ENCODE measurements at regions of chr9 and their contacts with region 1.

Region 1: GRCh38 chr9:93682232-93682968 is 106.0 kb downstream of the PHF2 start:
- DNase-seq: peak; percentile 72

Region 2: DNA sequence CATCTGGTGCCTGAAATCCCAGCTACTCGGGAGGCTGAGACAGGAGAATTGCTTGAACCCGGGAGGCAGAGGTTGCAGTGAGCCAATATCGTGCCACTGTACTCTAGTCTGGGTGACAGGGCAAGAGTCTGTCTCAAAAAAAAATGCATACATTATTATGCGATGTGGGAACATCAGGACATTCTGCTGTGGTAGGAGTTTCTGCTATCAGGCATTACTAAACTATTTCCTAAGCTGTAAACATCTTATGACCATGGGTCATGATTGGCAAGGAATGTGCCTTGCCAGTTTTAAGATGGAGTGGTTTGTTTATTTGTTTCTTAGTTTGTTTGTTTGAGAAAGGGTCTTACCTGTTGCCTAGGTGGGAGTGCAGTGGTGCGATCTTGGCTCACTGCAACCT is 276.0 kb before region 1 on chr9:
- intact Hi-C with region 1: no loop called
- DNase-seq: no peak

Region 3: GRCh38 chr9:93496296-93496695 is 186.1 kb before region 1 on chr9:
- intact Hi-C with region 1: no loop called
- DNase-seq: no peak

Region 4: GRCh38 chr9:93730217-93730616 is 47.8 kb after region 1 on chr9:
- intact Hi-C with region 1: no loop called
- DNase-seq: no peak

Region 5: GRCh38 chr9:93962561-93963440 is 280.4 kb after region 1 on chr9:
- intact Hi-C with region 1: loop called (anchors 2 kb)
- DNase-seq: peak; percentile 90

Region 6: DNA sequence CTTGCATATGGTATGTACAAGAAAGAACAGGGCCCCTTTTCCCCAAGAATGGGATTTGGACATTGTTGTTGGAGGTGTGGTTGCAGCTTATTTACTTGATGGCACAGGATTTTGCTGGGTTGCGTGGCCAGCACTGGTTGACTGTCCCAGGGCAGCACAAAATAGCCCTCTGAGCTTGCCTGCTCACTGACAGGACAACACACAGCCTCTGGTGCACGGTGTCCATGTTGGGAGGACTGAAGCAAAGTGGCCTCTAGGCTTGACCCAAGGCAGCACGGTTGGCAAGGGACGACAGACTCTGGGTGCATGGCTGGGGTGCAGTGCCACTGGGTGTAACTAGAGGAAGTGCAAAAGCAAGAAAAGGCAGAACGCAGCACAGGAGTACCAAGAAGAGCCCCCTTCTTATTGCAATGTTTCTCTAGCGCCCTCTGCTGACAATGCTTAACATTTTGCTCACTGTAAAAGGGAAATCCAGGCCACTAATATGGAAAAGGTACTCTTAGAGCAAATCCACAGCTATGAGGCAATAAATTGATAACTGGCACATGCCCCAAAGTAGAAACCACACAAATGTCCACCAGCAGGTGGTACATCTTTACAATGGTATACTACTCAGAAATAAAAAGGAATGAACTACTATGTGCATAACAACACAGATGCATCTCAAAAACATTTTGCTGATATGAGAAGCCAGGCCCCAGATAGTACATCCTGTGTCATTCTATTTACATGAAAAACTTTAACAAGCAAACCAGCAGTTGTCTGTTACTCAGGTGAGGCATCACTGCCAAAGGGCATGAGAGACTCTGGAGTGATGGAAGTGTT is 320.1 kb after region 1 on chr9:
- intact Hi-C with region 1: loop called (anchors 5 kb)
- DNase-seq: no peak

Region 7: DNA sequence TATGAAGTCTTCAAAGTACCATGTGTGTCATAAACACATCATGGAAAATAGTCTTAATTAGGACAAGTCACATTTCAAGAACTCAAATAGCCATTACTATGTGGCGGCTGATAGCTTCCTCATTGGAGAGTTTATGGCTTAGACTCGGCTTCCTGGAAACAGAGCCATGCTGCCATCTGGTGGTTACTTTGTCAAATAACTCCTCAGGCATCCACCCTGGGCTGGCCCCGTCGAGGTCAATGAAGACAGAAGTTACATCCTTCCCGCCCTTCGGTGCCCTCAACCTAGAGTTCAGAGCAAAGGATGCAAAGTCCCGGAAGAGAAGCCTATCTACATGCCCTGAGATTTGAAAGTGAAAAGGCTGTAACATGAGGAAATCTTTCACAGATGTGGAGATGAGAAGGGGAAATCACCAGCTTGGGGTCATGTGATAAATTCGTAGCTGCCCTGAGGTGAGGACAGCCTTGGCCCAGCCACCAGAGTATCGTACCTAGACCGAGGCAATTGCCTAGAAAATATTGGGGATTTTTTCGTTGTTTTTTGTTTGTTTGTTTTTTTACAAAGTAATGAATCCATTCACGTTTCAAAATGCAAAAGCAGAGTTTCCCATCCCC is 531.2 kb after region 1 on chr9:
- intact Hi-C with region 1: loop called (anchors 5 kb)
- DNase-seq: peak; percentile 85